ENCODE measurements at regions of chr14 and their contacts with region 1.

Region 1: GRCh38 chr14:64704143-64704742 is at the start of gene PLEKHG3:
- H3K4me3 ChIP-seq: peak within 1 kb of the TSS; percentile 75
- H3K27ac ChIP-seq: peak within 1 kb of the TSS; percentile 75; the same call in 1 of the 2 replicates
- H3K4me1 ChIP-seq: peaks cover 28% of the 10 kb centered on the region
- CTCF ChIP-seq: no peak

Region 2: GRCh38 chr14:64645220-64645892 is 58.9 kb before region 1 on chr14:
- CTCF ChIA-PET with region 1: no interaction called
- POLR2A ChIA-PET with region 1: no interaction called
- H3K4me3 ChIP-seq: no peak overlapping the region
- H3K27ac ChIP-seq: no peak overlapping the region
- H3K4me1 ChIP-seq: peaks cover 5% of the 10 kb centered on the region; the same call in 1 of the 2 replicates
- CTCF ChIP-seq: no peak

Region 3: GRCh38 chr14:64720131-64720576 is 15.9 kb after region 1 on chr14:
- CTCF ChIA-PET with region 1: interaction called, 3 read pairs
- POLR2A ChIA-PET with region 1: interaction called, 11 read pairs
- H3K4me3 ChIP-seq: no peak overlapping the region
- H3K27ac ChIP-seq: peak overlapping the region; percentile 57
- H3K4me1 ChIP-seq: peaks cover 22% of the 10 kb centered on the region
- CTCF ChIP-seq: no peak